ENCODE measurements at regions of chr7 and their contacts with region 1.

Region 1: GRCh38 chr7:22726345-22727185 is 435 bp upstream of the IL6 start:
- DNase-seq: peak; percentile 68 to 89 (median 72)
- ATAC-seq: peak; percentile 88
- H3K4me3 ChIP-seq: peak overlapping the region; percentile 33
- H3K27ac ChIP-seq: peak overlapping the region; percentile 42
- H3K4me1 ChIP-seq: peaks cover 16 to 58% of the 10 kb centered on the region in 2 experiments
- H3K27me3 ChIP-seq: no peaks in the 10 kb centered on the region
- CTCF ChIP-seq: peak; percentile 78 to 87 (median 82)
- EP300 ChIP-seq: peak; percentile 26; the same call in 1 of the 2 replicates
- POLR2A ChIP-seq: no peak
- RAD21 ChIP-seq: peak; percentile 79 to 92

Region 2: DNA sequence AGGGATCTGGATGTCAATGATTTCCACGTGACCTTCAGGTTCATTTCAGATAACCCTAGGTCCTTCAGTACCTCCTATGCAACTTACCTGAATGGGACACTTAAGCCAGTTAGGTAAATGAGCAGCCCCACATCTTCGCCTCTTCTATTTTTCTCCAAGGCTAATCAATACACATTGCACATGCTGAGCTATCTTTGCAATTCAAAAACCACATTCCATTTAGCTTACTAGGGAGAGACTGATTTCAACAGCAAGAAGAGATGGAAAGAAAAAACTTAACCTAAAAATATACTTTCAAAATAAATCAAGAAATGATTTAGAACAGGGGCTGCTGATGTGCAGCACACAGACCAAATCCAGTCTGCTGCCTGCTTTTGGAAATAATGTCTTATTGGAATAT is 699.1 kb before region 1 on chr7:
- CTCF ChIA-PET with region 1: no interaction called
- POLR2A ChIA-PET with region 1: no interaction called
- in situ Hi-C with region 1: no loop called
- intact Hi-C with region 1: no loop called
- DNase-seq: no peak
- ATAC-seq: no peak
- H3K4me3 ChIP-seq: no peak overlapping the region
- H3K27ac ChIP-seq: no peak overlapping the region
- H3K4me1 ChIP-seq: no peaks in the 10 kb centered on the region
- H3K27me3 ChIP-seq: peaks cover 9 to 19% of the 10 kb centered on the region in 2 experiments; a peak in 3 of 5 replicates
- CTCF ChIP-seq: no peak
- EP300 ChIP-seq: no peak
- POLR2A ChIP-seq: no peak
- RAD21 ChIP-seq: no peak

Region 3: DNA sequence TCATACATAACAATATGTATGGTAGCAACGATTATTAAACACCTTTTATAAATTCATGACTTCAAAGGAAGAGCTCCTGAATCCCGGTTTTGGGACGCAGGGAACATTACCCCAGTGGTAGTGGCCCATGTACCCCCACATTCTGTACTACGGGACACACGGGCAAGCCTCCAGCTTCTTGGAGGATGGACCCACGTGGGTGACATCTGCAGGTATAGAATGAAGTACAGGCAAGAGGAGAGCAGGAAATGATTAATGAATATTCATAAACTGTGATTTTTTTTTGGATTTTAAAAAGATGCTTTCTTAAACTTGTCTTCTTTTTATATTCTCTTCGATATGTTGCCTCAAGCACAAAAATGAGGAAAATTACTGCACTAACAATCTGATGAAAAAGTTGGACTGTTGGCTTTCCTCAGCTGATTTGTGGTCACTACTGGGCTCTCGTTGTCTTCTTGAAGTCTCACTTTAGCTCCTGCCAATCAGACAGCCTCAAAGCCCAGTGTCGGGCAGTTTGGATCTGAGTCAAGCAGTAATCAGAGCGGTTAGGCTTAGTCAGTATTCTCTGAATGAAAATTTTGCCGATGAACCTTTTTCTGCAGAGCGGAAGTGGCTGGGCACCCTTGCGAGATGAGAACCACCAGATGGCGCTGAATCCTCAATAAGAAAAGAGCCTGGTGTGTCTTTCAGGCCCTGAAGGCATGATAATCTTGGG is 623.2 kb before region 1 on chr7:
- CTCF ChIA-PET with region 1: no interaction called
- POLR2A ChIA-PET with region 1: no interaction called
- in situ Hi-C with region 1: loop called (anchors 25 kb)
- intact Hi-C with region 1: no loop called
- DNase-seq: peak; percentile 58 to 82 (median 68)
- ATAC-seq: peak; percentile 97
- H3K4me3 ChIP-seq: no peak overlapping the region
- H3K27ac ChIP-seq: no peak overlapping the region
- H3K4me1 ChIP-seq: no peaks in the 10 kb centered on the region
- H3K27me3 ChIP-seq: peaks cover 16 to 32% of the 10 kb centered on the region in 2 experiments; a peak in 4 of 5 replicates
- CTCF ChIP-seq: peak; percentile 74 to 87 (median 78)
- EP300 ChIP-seq: no peak
- POLR2A ChIP-seq: no peak
- RAD21 ChIP-seq: peak; percentile 84 to 86

Region 4: DNA sequence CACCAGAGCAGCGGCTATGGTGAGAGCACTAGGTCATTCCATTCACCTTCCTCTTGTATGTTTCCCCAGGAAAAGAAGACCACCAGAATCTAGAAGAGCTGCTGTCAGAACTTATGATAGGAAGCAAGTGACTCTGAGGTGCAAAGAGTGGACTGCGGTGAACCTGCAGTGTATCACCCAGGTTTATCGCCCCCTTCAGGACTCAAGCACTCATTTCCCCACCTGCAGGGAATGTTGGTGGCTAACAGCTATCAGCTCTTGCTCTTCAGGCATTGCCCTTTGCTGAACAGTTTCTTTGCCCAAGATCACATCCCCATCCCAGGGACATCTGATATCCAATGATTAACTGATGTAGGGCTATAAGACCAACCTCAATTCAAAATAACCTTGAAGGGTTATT is 65.8 kb before region 1 on chr7:
- CTCF ChIA-PET with region 1: interaction called, 4 read pairs
- POLR2A ChIA-PET with region 1: interaction called, 3 read pairs
- in situ Hi-C with region 1: no loop called
- intact Hi-C with region 1: loop called (anchors 1 kb)
- DNase-seq: peak in 3 of 4 experiments; percentile 37 to 63 (median 54)
- ATAC-seq: peak; percentile 79
- H3K4me3 ChIP-seq: no peak overlapping the region
- H3K27ac ChIP-seq: no peak overlapping the region
- H3K4me1 ChIP-seq: peaks cover 13 to 31% of the 10 kb centered on the region in 2 experiments; a peak in 4 of 5 replicates
- H3K27me3 ChIP-seq: no peaks in the 10 kb centered on the region
- CTCF ChIP-seq: peak; percentile 60 to 71 (median 64)
- EP300 ChIP-seq: no peak
- POLR2A ChIP-seq: no peak
- RAD21 ChIP-seq: peak in 1 of 2 experiments; percentile 42; a peak in 2 of 4 replicates

Region 5: DNA sequence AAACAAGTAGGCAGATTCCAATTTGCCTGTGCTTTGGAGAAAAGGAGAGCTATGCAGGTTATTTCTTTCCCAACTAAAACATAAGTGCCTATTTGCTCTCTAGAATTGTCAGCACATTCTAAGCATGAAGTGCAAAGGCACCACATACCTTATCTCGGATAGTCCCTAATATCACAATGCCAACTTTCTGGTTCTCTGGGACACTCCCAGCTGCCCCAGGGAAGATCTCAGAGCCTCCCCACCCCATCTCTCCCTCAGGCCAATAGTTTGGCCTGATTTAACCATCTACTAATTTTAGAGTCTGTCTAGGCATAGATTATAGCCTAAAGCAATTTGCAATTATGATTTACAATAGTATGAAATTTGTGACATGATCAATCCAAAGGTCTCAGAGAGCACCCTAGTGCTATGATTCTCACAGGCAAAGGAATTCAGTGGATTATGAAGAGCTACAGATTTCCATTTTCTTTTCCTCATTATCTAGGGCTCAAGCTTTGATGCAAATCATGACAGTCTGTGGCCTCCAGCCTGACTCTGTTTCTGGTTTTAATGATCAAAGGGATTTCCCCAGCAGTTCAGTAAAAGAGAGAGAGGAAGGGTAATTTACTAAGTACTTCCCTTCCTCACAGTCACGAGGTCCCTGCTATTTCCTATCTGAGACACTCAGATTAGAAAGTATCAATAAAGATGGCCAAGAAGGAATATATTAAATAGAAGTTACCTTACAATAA is 28.5 kb before region 1 on chr7:
- CTCF ChIA-PET with region 1: no interaction called
- POLR2A ChIA-PET with region 1: interaction called, 3 read pairs
- in situ Hi-C with region 1: no loop called
- intact Hi-C with region 1: loop called (anchors 1 kb)
- DNase-seq: no peak
- ATAC-seq: no peak
- H3K4me3 ChIP-seq: no peak overlapping the region
- H3K27ac ChIP-seq: peak overlapping the region; percentile 21; the same call in 1 of the 3 replicates
- H3K4me1 ChIP-seq: peaks cover 19 to 68% of the 10 kb centered on the region in 2 experiments
- H3K27me3 ChIP-seq: no peaks in the 10 kb centered on the region
- CTCF ChIP-seq: no peak
- EP300 ChIP-seq: no peak
- POLR2A ChIP-seq: no peak
- RAD21 ChIP-seq: no peak

Region 6: DNA sequence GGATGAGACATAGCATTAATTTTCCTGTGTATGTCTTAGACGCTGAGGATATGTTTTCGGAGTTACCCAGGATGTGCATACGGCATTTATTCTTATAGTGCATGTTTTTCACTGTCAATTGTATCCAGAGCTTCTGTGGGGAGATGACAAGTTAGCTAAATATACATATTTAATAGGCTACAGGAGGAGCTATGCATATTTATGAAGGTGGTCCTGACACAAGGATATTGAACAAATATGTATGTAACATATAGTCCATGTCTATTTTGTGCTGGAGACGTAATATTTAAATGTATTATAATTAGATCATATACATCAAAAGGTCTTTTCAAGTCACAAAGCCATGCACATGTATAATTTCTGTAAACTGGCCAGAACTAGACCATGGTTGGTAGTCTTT is 16.4 kb after region 1 on chr7:
- CTCF ChIA-PET with region 1: no interaction called
- POLR2A ChIA-PET with region 1: no interaction called
- in situ Hi-C with region 1: no loop called
- intact Hi-C with region 1: no loop called
- DNase-seq: no peak
- ATAC-seq: no peak
- H3K4me3 ChIP-seq: no peak overlapping the region
- H3K27ac ChIP-seq: no peak overlapping the region
- H3K4me1 ChIP-seq: no peaks in the 10 kb centered on the region
- H3K27me3 ChIP-seq: no peaks in the 10 kb centered on the region
- CTCF ChIP-seq: no peak
- EP300 ChIP-seq: no peak
- POLR2A ChIP-seq: no peak
- RAD21 ChIP-seq: no peak

Region 7: GRCh38 chr7:22782616-22783232 is 56.2 kb after region 1 on chr7:
- CTCF ChIA-PET with region 1: interaction called, 3 read pairs
- POLR2A ChIA-PET with region 1: interaction called, 4 read pairs
- in situ Hi-C with region 1: no loop called
- intact Hi-C with region 1: loop called (anchors 2 kb)
- DNase-seq: peak; percentile 79 to 86 (median 83)
- ATAC-seq: peak; percentile 99
- H3K4me3 ChIP-seq: no peak overlapping the region
- H3K27ac ChIP-seq: no peak overlapping the region
- H3K4me1 ChIP-seq: peaks cover 0 to 5% of the 10 kb centered on the region in 2 experiments; a peak in 1 of 5 replicates
- H3K27me3 ChIP-seq: no peaks in the 10 kb centered on the region
- CTCF ChIP-seq: peak; percentile 88 to 96 (median 91)
- EP300 ChIP-seq: no peak; the same call in 1 of the 2 replicates
- POLR2A ChIP-seq: no peak
- RAD21 ChIP-seq: peak; percentile 78 to 87

Region 8: GRCh38 chr7:23055582-23056178 is 329.1 kb after region 1 on chr7:
- CTCF ChIA-PET with region 1: interaction called, 11 read pairs
- POLR2A ChIA-PET with region 1: no interaction called
- in situ Hi-C with region 1: no loop called
- intact Hi-C with region 1: loop called (anchors 2 kb)
- DNase-seq: peak; percentile 62 to 81 (median 67)
- ATAC-seq: peak; percentile 91
- H3K4me3 ChIP-seq: no peak overlapping the region
- H3K27ac ChIP-seq: no peak overlapping the region
- H3K4me1 ChIP-seq: no peaks in the 10 kb centered on the region; a peak in 2 of 5 replicates
- H3K27me3 ChIP-seq: no peaks in the 10 kb centered on the region
- CTCF ChIP-seq: peak; percentile 84 to 95 (median 86)
- EP300 ChIP-seq: 0 out of 2 replicates have a peak, but pooled peaks have one; percentile 12
- POLR2A ChIP-seq: no peak
- RAD21 ChIP-seq: peak; percentile 97